Ovary (tissue), 10 donors: ENCODE measurements at regions of chr11 and their contacts with region 1.

Region 1: DNA sequence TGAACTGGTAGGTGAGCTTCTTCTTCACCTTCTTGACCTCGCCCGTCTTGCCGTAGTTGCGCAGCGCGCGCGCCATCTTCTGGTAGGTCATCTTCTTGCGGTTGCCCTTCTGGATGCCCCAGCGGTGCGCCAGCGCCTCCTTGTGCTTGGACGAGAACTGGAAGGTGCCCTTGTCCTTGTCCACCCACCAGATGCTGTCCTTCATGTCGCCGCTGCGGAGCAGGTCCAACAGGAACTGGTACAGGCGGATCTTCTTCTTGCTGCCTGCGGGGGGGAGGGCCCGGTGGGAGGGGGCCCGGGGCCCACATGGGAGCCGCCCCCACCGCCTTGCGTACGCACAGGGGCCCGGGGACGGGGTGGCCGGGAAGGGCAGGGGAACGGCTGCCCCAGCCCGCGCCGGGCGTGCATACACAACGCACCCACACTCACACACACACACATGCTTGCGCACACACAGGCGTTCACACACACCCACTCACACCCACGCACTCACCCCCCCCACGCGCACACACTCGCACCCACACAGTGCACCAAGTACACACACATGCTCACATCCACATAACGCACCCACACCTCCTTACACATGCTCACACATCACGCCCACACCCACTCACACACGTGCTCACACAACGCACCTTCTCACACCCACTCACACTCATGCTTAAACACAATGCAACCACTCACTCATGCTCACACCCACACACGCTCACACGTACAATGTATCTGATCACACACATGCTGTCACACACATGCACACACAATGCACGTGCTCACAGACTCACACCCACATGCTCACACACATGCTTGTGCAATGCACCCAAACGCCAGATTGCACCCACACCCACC is 3.0 kb upstream of the MYBPC3 start:
- DNase-seq: peak; percentile 91 to 97 (median 94)
- H3K4me3 ChIP-seq: peak overlapping the region; percentile 49
- H3K27ac ChIP-seq: peak overlapping the region in 1 of 2 donors; percentile 72
- H3K4me1 ChIP-seq: peaks cover 2% of the 10 kb centered on the region
- H3K27me3 ChIP-seq: no peaks in the 10 kb centered on the region
- CTCF ChIP-seq: peak; percentile 87 to 96 (median 93)
- EP300 ChIP-seq: no peak
- POLR2A ChIP-seq: no peak

Region 2: DNA sequence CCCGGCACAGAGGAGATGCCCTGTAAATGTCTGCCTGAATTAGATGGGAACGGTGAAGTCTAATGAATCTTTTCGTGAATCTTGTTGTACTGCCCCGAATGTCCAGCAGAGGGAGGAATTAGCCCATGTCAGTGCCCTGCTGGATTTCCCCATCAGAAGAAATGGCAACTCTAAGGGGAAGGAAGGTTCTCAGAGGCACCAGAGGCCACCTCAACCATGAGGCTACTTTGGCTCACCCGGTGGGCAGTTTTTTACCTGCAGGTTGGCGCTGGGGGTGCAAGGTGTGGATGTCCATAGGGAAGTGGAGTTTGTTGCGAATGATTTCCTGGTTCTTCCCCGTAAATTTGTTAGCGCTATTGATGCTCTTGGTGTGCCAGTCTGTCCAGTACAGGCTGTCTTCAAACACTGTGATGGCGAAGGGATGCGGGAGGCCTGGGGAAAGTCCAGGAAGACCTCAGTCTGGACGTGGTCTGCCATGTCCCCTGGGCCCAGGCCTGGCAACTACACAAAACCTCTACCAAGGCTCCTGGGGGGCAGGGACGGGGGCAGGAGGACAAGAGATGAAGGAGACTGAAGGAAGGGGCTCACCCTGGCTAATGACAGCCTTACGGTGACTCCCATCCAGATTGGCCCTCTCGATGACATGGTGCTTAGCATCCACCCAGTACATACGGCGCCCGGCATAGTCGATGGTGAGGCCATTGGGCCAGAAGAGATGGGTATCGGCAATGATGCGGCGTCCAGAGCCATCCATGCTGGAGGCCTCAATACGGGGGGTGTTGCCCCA is 465.6 kb before region 1 on chr11:
- intact Hi-C with region 1: loop called in 2 of 4 experiments (anchors 10 kb)
- DNase-seq: peak; percentile 62 to 83 (median 68)
- H3K4me3 ChIP-seq: no peak overlapping the region
- H3K27ac ChIP-seq: no peak overlapping the region
- H3K4me1 ChIP-seq: no peaks in the 10 kb centered on the region
- H3K27me3 ChIP-seq: no peaks in the 10 kb centered on the region
- CTCF ChIP-seq: peak; percentile 72 to 92 (median 86)
- EP300 ChIP-seq: no peak
- POLR2A ChIP-seq: no peak

Region 3: DNA sequence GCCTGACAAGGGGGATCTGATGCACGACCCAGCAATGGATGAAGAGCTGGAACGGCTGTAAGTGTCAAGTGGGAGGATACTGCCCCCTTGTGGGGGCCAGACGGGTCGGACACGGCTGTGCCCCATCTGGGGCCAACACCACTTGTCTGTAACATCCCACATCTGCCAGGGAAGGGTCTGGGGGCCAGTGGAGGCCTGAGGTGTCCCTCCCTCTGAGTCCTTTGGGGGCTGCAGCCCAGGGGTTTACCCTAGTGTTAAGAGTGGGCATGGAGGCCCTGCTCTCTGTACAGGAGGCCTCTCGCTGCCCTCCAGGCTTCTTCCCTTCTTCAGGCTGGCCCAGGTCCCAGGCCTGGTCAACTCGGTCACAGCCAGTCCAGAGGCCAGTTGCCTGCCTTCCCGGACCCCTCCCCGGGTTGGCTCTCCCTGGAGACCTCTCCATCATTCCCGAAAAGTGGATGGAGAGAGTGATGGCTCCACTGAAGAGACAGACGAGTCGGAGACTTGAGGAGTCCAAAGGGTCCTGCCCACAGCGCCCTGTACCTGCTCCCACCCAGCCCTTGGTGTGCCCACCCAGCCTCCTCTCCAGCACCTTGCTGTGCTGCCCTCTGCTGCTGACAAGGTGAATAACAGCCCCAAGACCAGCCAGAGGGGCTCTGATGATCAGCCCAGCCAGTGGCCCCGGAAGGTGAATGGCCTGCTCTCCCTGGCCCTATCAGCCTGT is 194.2 kb before region 1 on chr11:
- intact Hi-C with region 1: loop called in 1 of 4 experiments (anchors 10 kb)
- DNase-seq: peak; percentile 58 to 74 (median 64)
- H3K4me3 ChIP-seq: no peak overlapping the region
- H3K27ac ChIP-seq: peak overlapping the region; percentile 16 to 34
- H3K4me1 ChIP-seq: peaks cover 3% of the 10 kb centered on the region
- H3K27me3 ChIP-seq: no peaks in the 10 kb centered on the region
- CTCF ChIP-seq: peak; percentile 26 to 52 (median 38)
- EP300 ChIP-seq: no peak
- POLR2A ChIP-seq: no peak

Region 4: DNA sequence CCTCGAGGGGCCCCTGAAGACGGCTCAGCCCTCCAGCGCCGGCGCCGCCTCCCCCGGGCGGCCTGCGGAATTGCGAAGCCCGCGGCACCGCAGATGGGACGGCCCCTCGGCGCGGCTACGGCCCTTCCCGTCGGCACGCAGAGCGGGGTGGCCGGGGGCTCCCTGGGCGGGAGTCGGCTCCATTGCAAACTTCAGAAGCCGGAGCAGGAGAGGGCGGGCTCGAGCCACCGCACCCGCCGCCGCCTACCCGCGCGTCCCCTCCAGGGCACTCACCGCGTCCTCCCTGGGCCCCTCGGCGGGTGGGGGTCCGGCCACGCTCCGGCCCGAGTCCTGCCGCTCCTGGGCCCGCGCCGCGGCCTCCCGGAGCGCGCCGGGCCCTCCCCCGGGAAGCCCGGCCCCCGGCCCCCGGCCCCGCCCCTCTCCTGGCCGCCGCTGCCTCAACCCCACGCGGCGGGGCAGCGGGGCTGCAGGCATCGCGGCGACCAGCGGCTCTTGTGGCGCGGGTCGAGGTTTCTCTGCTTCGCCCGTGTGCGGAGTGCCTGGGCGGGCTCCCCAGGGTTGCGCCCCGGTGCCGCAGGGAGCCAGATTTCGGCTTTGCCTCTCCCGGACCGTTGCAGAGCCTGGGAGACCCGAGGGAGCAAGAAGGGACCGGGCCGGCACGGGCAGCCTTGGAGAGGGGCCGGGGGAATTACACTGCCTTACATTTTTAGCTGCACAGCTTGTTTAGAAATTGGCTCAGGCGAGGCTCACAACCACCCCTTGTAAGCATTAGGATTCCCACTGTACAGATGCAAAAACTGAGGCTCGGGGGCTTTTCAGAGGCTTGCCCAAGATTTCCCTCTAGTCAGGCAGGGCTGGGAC is 169.2 kb before region 1 on chr11 and contains the start of gene PACSIN3:
- intact Hi-C with region 1: loop called in 1 of 4 experiments (anchors 5 kb)
- DNase-seq: peak; percentile 53 to 76 (median 67)
- H3K4me3 ChIP-seq: peak within 1 kb of the TSS; percentile 61
- H3K27ac ChIP-seq: peak within 1 kb of the TSS; percentile 81 to 94
- H3K4me1 ChIP-seq: peaks cover 8% of the 10 kb centered on the region
- H3K27me3 ChIP-seq: no peaks in the 10 kb centered on the region
- CTCF ChIP-seq: no peak
- EP300 ChIP-seq: no peak
- POLR2A ChIP-seq: peak; percentile 23
- total RNA-seq, gene PACSIN3: 26.1 to 69.8 (median 40.8) TPM

Region 5: GRCh38 chr11:47269002-47269828 is 86.3 kb before region 1 on chr11:
- intact Hi-C with region 1: loop called in 1 of 4 experiments (anchors 10 kb)
- DNase-seq: peak; percentile 91 to 94 (median 93)
- H3K4me3 ChIP-seq: peak overlapping the region; percentile 88
- H3K27ac ChIP-seq: peak overlapping the region; percentile 80 to 98
- H3K4me1 ChIP-seq: peaks cover 1% of the 10 kb centered on the region
- H3K27me3 ChIP-seq: no peaks in the 10 kb centered on the region
- CTCF ChIP-seq: peak in 2 of 3 donors; percentile 15 to 34
- EP300 ChIP-seq: no peak
- POLR2A ChIP-seq: peak; percentile 34

Region 6: GRCh38 chr11:47477323-47477722 is 121.8 kb after region 1 on chr11:
- intact Hi-C with region 1: no loop called
- DNase-seq: no peak
- H3K4me3 ChIP-seq: no peak overlapping the region
- H3K27ac ChIP-seq: no peak overlapping the region
- H3K4me1 ChIP-seq: no peaks in the 10 kb centered on the region
- H3K27me3 ChIP-seq: no peaks in the 10 kb centered on the region
- CTCF ChIP-seq: no peak
- EP300 ChIP-seq: no peak
- POLR2A ChIP-seq: no peak